ENCODE measurements at regions of chr16 and their contacts with region 1.

Region 1: GRCh38 chr16:87062569-87063442 is 254.4 kb downstream of the C16orf95 start:
- DNase-seq: peak; percentile 88
- H3K4me3 ChIP-seq: peak overlapping the region; percentile 24 to 93 (median 43)
- H3K27ac ChIP-seq: peak overlapping the region; percentile 92
- H3K4me1 ChIP-seq: peaks cover 49% of the 10 kb centered on the region
- H3K27me3 ChIP-seq: no peaks in the 10 kb centered on the region
- CTCF ChIP-seq: peak; percentile 80 to 83
- POLR2A ChIP-seq: no peak

Region 2: GRCh38 chr16:86664533-86665318 is 398.1 kb before region 1 on chr16:
- CTCF ChIA-PET with region 1: interaction called, 6 read pairs
- POLR2A ChIA-PET with region 1: no interaction called
- dilution Hi-C with region 1: no loop called
- intact Hi-C with region 1: loop called (anchors 2 kb)
- DNase-seq: peak; percentile 94
- H3K4me3 ChIP-seq: no peak overlapping the region
- H3K27ac ChIP-seq: peak overlapping the region; percentile 95
- H3K4me1 ChIP-seq: peaks cover 60% of the 10 kb centered on the region
- H3K27me3 ChIP-seq: no peaks in the 10 kb centered on the region
- CTCF ChIP-seq: no peak
- POLR2A ChIP-seq: no peak

Region 3: DNA sequence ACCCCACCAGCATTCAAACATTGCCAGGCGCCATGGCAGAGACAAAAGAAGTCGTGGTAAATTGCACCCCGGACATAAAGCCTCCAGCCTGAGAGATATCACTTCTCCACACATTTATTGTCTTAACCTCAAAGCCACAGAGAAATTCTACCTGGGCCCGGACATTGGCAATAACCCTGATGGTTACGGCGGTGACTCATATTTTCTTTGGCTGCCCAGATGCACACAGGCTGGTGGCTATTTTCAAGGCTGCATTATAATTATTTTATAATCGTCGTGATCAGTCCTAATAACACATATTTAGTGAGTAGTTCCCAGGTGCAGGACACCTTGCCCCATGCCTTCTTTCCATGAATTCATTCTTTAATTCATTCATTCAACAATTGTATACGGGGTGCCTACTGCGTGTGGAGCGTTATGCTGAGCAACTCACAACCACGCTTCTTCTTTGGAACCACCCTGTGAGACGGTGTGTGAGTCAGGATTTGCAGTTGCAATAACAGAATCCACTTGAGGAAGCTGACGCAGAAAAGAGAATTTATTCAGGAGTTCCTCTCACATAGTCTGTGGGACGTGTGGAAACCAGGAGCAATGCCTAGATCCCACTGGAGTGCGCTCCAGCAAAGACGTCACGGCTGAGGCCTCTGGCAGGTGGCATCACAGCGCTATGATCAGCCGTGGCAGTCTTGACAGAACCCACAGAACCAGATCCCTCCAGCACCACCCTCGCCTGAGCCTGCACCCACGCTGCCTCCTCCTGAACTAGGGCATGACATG is 238.7 kb before region 1 on chr16:
- CTCF ChIA-PET with region 1: interaction called, 4 read pairs
- POLR2A ChIA-PET with region 1: no interaction called
- dilution Hi-C with region 1: no loop called
- intact Hi-C with region 1: loop called (anchors 2 kb)
- DNase-seq: peak; percentile 87
- H3K4me3 ChIP-seq: peak overlapping the region in 1 of 3 experiments; percentile 7
- H3K27ac ChIP-seq: peak overlapping the region; percentile 93
- H3K4me1 ChIP-seq: peaks cover 50% of the 10 kb centered on the region
- H3K27me3 ChIP-seq: no peaks in the 10 kb centered on the region
- CTCF ChIP-seq: no peak
- POLR2A ChIP-seq: peak; percentile 50

Region 4: DNA sequence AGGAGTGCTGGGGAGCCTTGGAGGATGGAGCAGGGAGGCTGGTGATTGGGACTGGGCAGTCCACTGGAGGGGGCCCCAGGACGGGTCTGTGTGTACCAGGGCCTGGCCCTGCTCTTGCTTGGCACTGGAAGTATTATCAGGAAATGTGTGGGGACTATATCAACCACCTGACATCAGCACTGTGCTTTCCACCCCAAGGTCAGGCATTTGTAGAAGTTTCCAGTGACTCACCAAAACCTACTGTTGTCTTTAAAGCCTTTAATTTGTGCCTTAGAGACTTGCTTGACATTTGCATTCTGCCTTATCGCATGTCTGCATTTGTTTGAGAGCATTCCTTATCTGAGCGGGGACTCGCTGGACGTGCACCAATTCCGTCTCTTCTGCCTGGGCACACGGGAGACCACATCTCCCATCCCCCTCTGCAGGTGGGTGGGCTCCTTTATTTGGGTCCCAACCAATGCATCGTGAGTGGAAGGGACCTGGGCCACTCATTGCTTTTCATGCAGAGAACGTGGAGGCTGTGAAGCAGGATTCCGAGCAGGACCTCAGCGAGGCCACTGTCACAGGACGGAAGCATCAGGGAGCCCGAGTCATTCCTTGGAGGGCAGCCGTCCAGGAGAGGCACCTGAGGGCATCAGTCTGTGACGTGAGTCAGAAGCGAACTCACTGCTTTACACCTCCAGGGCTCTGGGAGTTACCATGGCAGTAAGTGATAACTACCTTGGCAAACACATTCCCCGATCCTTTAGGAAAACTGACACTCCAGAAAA is 161.1 kb before region 1 on chr16:
- CTCF ChIA-PET with region 1: interaction called, 4 read pairs
- POLR2A ChIA-PET with region 1: no interaction called
- dilution Hi-C with region 1: no loop called
- intact Hi-C with region 1: loop called (anchors 1 kb)
- DNase-seq: peak; percentile 94
- H3K4me3 ChIP-seq: no peak overlapping the region
- H3K27ac ChIP-seq: peak overlapping the region; percentile 53
- H3K4me1 ChIP-seq: peaks cover 24% of the 10 kb centered on the region
- H3K27me3 ChIP-seq: no peaks in the 10 kb centered on the region
- CTCF ChIP-seq: peak in 1 of 2 donors; percentile 49
- POLR2A ChIP-seq: no peak

Region 5: GRCh38 chr16:87043231-87044031 is 19.4 kb before region 1 on chr16:
- CTCF ChIA-PET with region 1: interaction called, 19 read pairs
- POLR2A ChIA-PET with region 1: no interaction called
- dilution Hi-C with region 1: no loop called
- intact Hi-C with region 1: no loop called
- DNase-seq: peak; percentile 47
- H3K4me3 ChIP-seq: no peak overlapping the region
- H3K27ac ChIP-seq: no peak overlapping the region
- H3K4me1 ChIP-seq: peaks cover 9% of the 10 kb centered on the region
- H3K27me3 ChIP-seq: peaks cover 0 to 8% of the 10 kb centered on the region in 2 experiments
- CTCF ChIP-seq: no peak
- POLR2A ChIP-seq: no peak

Region 6: DNA sequence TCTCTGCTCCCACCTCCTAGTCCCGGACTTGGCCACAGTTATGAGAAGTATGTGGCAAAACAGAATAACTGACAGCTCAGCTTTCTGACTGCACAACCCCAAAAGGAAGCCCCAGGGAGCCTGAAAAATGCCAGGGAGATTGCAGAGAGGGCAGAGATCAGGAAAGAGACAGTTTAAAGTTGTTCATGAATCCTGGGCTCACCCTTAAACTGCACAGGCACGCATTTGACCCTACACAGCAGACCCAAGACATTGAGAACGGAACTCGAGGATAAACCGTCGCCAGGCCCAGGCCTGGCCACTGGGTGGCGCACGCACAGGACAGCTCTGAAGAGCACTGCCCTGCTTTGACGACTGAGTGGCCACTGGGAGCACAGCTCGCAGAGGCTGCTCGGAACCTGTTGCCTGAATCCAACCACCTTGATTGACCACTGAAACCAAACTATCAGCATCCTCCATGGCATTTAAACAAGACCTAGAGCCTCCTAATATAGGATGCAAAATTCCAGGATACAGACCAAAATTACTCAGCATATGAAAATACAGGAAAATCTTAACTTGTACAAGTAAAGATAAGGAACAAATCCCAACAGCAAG is 140.4 kb after region 1 on chr16:
- CTCF ChIA-PET with region 1: interaction called, 14 read pairs
- POLR2A ChIA-PET with region 1: no interaction called
- dilution Hi-C with region 1: no loop called
- intact Hi-C with region 1: loop called (anchors 5 kb)
- DNase-seq: peak; percentile 77
- H3K4me3 ChIP-seq: no peak overlapping the region
- H3K27ac ChIP-seq: no peak overlapping the region
- H3K4me1 ChIP-seq: no peaks in the 10 kb centered on the region
- H3K27me3 ChIP-seq: peaks cover 0 to 9% of the 10 kb centered on the region in 2 experiments
- CTCF ChIP-seq: peak; percentile 97 to 98
- POLR2A ChIP-seq: no peak

Region 7: DNA sequence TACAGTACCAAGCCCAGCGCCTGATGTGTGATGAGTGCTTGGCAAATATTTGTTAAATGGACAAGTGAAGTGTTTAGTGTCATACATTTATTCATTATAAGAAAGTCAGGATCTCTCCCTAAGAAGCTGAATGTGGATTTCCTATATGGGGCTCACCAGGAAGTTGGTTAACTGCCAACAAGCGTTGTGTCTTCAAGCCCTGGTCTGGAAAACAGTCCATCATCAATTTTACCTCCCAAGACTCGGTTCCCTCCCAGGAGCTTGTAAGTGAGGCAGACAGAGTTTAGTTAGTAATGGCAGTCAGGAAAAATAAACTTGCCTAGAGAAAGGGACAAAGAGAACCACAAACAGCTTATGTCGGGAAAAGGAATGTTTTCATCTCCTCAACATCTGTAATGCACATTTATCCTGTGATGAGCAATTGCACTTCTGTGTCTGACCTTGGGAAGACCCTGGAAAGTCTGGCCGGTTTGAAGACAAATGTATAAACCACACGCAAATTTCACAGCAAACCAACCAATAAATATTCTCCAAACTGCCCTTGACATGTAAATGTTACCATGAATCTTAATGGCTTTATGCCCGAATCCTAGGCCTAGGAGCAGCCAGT is 226.1 kb after region 1 on chr16:
- CTCF ChIA-PET with region 1: no interaction called
- POLR2A ChIA-PET with region 1: no interaction called
- dilution Hi-C with region 1: no loop called
- intact Hi-C with region 1: no loop called
- DNase-seq: no peak
- H3K4me3 ChIP-seq: no peak overlapping the region
- H3K27ac ChIP-seq: no peak overlapping the region
- H3K4me1 ChIP-seq: no peaks in the 10 kb centered on the region
- H3K27me3 ChIP-seq: no peaks in the 10 kb centered on the region
- CTCF ChIP-seq: no peak
- POLR2A ChIP-seq: no peak

Region 8: DNA sequence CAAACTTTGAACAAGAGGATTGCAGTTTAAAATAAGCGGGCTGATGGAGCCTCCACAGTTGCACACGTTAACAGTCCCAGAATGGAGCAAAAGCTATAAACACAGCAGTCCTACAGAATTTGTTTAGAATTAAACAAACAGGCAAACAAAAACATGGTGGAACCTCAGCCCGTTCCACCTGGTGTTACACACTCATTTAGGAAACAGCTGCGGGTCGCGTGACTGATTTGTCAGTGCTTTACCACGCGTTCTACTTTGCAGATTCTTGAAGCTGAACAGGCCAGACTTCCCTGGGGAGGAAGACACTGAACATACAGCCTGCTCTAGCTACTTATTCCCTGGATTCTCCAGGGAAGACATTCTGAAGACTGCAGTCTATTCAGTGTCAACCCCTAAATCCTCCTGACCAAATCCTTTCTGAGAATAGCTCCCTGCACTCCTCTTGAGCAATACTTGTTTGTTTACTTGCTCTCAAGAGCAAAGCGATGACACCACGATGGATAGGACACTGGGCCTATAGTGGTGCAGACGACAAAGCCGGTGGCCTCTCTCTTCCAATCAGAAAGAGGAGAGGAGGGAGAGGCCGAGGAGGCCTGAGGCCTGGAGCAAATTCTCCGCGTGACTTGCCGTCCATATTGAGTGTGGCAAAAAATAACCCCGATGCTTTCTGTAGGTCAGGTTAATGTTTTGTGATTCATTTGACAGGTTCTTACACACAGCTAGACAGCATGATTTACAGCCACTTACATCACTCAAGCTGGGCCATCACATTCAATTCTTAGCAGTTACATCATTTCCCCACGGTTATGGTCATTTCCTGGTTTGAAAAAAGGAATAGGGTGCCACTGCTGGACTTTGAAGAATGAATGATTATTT is 325.4 kb after region 1 on chr16:
- CTCF ChIA-PET with region 1: no interaction called
- POLR2A ChIA-PET with region 1: no interaction called
- dilution Hi-C with region 1: no loop called
- intact Hi-C with region 1: loop called (anchors 10 kb)
- DNase-seq: peak; percentile 99
- H3K4me3 ChIP-seq: no peak overlapping the region
- H3K27ac ChIP-seq: peak overlapping the region; percentile 84
- H3K4me1 ChIP-seq: peaks cover 21% of the 10 kb centered on the region
- H3K27me3 ChIP-seq: no peaks in the 10 kb centered on the region
- CTCF ChIP-seq: no peak
- POLR2A ChIP-seq: peak; percentile 8

Measured in endothelial cell of umbilical vein (primary cell).